A549 (cell line): ENCODE measurements at regions of chr2 and their contacts with region 1.

Region 1: GRCh38 chr2:70258532-70258874 is 566 bp downstream of the PCYOX1 start:
- DNase-seq: peak in 1 of 2 experiments; percentile 34
- ATAC-seq: peak in 1 of 2 experiments; percentile 36; a peak in 5 of 6 replicates
- H3K4me3 ChIP-seq: peak overlapping the region; percentile 66
- H3K27ac ChIP-seq: peak overlapping the region; percentile 86 to 93
- H3K4me1 ChIP-seq: peaks cover 5% of the 10 kb centered on the region; the same call in 1 of the 3 replicates
- CTCF ChIP-seq: no peak
- EP300 ChIP-seq: no peak
- POLR2A ChIP-seq: no peak
- RAD21 ChIP-seq: no peak

Region 2: GRCh38 chr2:70248181-70248847 is 10.2 kb before region 1 on chr2 and contains the start of gene TIA1:
- CTCF ChIA-PET with region 1: no interaction called
- POLR2A ChIA-PET with region 1: interaction called, 21 read pairs
- DNase-seq: peak; percentile 97 to 99
- ATAC-seq: peak; percentile 94 to 97
- H3K4me3 ChIP-seq: peak within 1 kb of the TSS; percentile 70
- H3K27ac ChIP-seq: peak within 1 kb of the TSS; percentile 93 to 97
- H3K4me1 ChIP-seq: peaks cover 22% of the 10 kb centered on the region
- CTCF ChIP-seq: no peak
- EP300 ChIP-seq: no peak
- POLR2A ChIP-seq: peak; percentile 74
- RAD21 ChIP-seq: no peak
- polyA plus RNA-seq, gene TIA1: 148 and 173 TPM in 2 replicates

Region 3: DNA sequence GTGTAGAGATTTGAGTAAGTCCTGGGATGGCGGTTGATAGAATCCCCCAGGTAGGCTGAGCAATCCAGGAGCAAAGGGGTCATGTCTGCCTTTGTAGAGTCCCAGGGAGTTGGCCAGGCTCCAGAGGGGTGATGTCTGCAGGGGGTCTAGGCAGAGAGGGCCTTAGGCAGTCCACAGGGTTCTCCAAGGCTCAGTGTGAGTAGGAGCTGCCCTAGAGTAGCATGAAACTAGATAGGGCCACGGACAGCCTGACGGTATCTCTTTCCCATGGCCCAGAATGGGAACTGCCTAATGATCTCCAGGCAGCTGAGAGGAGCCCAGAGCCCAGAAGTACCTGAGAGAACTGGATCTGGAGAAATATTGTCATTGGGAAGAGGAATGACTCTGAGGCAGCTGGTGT is 52.4 kb after region 1 on chr2:
- CTCF ChIA-PET with region 1: no interaction called
- POLR2A ChIA-PET with region 1: no interaction called
- DNase-seq: no peak
- ATAC-seq: peak in 1 of 2 experiments; percentile 38; a peak in 1 of 6 replicates
- H3K4me3 ChIP-seq: no peak overlapping the region
- H3K27ac ChIP-seq: no peak overlapping the region
- H3K4me1 ChIP-seq: no peaks in the 10 kb centered on the region
- CTCF ChIP-seq: no peak
- EP300 ChIP-seq: no peak
- POLR2A ChIP-seq: no peak
- RAD21 ChIP-seq: no peak

Region 4: DNA sequence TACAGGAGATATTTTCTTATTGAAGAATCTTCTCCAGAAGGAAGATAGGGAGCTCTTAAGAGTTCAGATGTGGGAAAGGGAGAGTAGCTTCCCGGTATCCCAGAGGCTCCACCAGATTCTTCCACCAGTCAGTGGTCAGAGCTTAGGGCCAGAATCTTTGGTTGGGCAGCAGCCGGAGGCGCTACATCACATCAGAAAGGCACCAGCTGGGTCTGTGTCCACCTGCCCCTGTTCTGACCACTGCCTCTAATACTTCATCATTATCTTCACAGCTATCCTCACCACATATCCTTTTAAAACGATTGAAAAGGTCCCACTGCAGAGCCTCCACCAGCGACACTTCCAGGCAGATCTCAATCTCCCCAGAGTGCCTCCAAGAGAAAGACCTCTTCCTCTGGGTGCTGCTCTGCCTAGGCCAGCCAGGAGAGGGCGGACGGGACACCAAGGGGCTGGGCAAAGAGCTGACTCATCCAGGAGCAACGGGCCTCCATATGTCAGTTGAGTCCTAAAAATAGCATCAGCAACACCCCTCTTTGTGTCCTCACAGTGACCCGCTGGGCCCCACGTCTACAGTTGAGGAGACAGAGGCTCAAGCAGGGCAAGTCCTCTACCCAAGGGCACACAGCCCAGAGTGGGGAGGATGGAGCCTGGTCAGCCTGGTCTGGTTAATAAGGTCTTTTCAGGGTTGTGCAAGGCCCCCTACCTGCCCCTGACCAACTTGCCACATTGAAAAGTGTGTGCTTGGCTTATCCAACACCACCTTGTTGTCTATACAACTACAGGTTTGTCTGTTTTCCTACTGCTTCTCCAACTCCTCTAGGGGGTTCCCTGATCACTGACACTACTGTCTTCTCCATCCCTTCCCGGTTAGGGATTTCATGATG is 428.3 kb after region 1 on chr2:
- CTCF ChIA-PET with region 1: no interaction called
- POLR2A ChIA-PET with region 1: no interaction called
- DNase-seq: peak; percentile 86 to 93
- ATAC-seq: peak; percentile 97 to 100
- H3K4me3 ChIP-seq: no peak overlapping the region
- H3K27ac ChIP-seq: peak overlapping the region; percentile 59 to 80; a peak in 5 of 6 replicates
- H3K4me1 ChIP-seq: peaks cover 7% of the 10 kb centered on the region
- CTCF ChIP-seq: peak; percentile 58
- EP300 ChIP-seq: no peak
- POLR2A ChIP-seq: no peak
- RAD21 ChIP-seq: peak; percentile 39 to 51; a peak in 3 of 5 replicates